ENCODE measurements at regions of chr17 and their contacts with region 1.

Region 1: DNA sequence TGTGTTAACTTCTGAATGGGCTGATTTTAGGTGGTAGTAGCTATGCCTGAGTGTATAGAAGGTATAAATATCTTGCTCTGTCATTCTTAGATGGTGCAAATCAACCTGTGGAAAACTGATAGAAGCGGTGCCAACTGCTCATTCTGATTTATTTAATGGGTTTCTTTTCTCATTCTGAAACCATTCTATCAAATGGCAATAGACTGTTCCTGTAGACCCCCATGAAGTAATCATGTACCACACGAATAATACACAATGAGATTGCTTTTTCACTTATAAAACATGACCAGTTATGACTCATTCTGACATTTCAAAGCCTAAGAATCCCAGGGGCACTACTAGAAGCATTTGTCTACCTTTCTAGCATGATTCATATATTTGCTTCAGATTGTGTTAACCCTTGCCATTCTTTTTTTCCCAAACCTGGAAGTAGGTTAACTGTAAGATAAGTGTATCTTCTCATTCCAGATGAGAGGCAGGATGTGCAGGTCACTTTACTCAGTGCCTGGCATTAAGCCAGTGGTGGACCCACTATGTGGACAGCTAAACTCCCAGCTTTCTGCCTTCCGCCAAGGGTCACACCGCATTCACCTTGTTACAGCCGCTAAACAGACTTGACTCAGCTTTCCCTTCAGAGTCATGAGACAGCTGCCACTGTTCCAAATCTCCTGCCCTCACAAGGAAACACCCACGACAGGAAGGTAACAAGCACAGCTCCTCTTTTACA is 16.4 kb upstream of the SLC16A11 start:
- DNase-seq: peak; percentile 98
- ATAC-seq: peak; percentile 91
- H3K4me3 ChIP-seq: no peak overlapping the region
- H3K27ac ChIP-seq: peak overlapping the region; percentile 91
- H3K4me1 ChIP-seq: peaks cover 29% of the 10 kb centered on the region
- H3K27me3 ChIP-seq: no peaks in the 10 kb centered on the region
- CTCF ChIP-seq: no peak

Region 2: GRCh38 chr17:7095625-7096024 is 35.3 kb after region 1 on chr17:
- CTCF ChIA-PET with region 1: no interaction called
- POLR2A ChIA-PET with region 1: no interaction called
- intact Hi-C with region 1: loop called (anchors 5 kb)
- DNase-seq: no peak
- ATAC-seq: no peak
- H3K4me3 ChIP-seq: no peak overlapping the region
- H3K27ac ChIP-seq: no peak overlapping the region
- H3K4me1 ChIP-seq: no peaks in the 10 kb centered on the region; the same call in 1 of the 2 replicates
- H3K27me3 ChIP-seq: no peaks in the 10 kb centered on the region
- CTCF ChIP-seq: no peak

Region 3: DNA sequence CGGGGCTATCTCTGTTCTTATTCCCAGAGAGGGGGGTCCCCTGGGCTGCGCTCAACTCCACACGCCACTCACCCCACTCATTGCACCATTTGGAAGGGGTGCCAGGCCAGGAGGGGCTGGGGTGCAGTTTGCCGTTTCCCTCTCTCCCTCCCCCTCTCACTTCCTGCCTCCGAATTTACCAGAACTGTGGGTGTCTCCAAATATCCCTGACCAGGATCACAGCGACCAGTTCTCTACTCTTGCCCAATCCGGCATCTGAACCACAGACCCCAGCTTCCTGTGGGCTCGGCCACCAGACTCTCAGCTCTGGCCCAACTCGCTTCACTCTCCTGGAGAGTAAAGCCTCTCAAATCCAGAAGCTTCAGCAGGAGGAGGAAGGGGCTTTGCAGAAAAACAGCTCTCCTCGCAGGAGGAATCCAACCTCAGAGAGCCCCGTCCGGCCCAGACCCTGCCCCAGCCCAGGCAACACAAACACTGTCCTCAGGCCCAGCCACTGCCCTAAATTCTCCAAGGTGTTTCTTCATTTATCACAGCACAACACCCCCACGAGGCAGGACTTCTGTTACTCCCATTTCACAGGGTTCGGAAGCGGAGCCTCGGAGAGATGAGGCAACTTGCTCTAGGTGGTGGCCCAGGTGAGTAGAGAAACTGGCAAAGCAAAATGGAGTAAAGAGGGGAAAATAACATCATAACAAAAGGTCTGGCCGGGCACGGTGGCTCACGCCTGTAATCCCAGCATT is 54.7 kb after region 1 on chr17:
- CTCF ChIA-PET with region 1: no interaction called
- POLR2A ChIA-PET with region 1: no interaction called
- intact Hi-C with region 1: no loop called
- DNase-seq: no peak
- ATAC-seq: no peak
- H3K4me3 ChIP-seq: no peak overlapping the region
- H3K27ac ChIP-seq: no peak overlapping the region
- H3K4me1 ChIP-seq: no peaks in the 10 kb centered on the region
- H3K27me3 ChIP-seq: no peaks in the 10 kb centered on the region
- CTCF ChIP-seq: no peak

Region 4: GRCh38 chr17:7204828-7205461 is 144.6 kb after region 1 on chr17:
- CTCF ChIA-PET with region 1: no interaction called
- POLR2A ChIA-PET with region 1: no interaction called
- intact Hi-C with region 1: no loop called
- DNase-seq: no peak
- ATAC-seq: no peak
- H3K4me3 ChIP-seq: no peak overlapping the region
- H3K27ac ChIP-seq: no peak overlapping the region
- H3K4me1 ChIP-seq: no peaks in the 10 kb centered on the region
- H3K27me3 ChIP-seq: no peaks in the 10 kb centered on the region
- CTCF ChIP-seq: no peak

Region 5: DNA sequence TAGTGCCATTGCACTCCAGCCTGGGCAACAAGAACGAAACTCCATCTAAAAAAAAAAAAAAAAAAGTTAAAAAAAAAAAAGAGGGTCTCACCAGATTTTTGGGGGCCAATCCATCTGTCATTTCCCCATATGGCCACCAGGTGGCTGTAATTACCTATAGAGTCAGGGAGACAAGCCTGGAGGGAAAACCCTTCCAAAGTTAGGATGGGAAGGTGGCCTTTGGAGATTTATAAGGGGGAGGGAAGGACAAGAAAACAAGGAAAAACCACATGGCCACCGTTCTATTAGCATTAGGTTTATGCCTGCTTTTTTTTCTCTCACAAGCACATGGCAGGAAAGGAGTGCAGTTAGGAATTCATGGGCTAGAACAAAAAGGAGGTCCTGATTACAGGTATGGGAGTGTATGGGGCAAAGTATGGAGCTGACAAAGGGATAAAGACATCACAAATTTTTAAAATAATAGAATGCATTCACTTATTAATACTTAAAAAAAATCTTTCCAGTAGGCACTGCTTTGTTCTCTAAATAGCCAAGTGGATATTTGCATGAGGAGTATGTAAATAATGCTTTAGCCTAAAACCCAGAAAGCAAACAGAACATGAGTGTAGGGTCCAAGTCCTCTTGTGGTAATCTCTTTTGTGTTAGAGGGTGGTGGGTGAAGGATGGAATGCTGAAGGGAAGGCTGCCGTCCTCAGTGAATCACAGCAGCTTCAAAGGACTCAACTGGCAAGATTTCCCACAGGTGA is 802.5 kb after region 1 on chr17:
- CTCF ChIA-PET with region 1: no interaction called
- POLR2A ChIA-PET with region 1: no interaction called
- intact Hi-C with region 1: no loop called
- DNase-seq: peak; percentile 60
- ATAC-seq: no peak
- H3K4me3 ChIP-seq: no peak overlapping the region
- H3K27ac ChIP-seq: no peak overlapping the region
- H3K4me1 ChIP-seq: peaks cover 11% of the 10 kb centered on the region; the same call in 1 of the 2 replicates
- H3K27me3 ChIP-seq: no peaks in the 10 kb centered on the region
- CTCF ChIP-seq: peak; percentile 68